OCI-LY7 (cell line): ENCODE measurements at regions of chr4 and their contacts with region 1.

Region 1: DNA sequence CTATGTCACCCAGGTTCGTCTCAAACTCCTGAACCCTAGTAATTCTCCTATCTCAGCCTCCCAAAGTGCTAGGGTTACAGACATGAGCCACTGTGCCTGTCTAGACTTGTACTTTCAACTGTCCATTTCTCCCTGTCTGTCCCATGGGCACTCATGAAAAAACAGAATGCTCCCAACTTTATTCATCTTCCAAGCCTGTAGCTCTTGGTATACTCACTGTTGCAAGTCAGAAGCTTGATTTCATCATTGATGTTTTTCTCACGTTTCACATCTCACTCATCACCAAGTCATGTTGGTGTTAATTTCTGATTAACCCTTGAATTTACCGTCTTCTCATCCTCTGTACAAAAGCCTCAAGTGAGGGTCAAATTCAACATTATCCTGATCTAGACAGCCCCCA is 7.3 kb upstream of the SRP72 start:
- DNase-seq: no peak
- H3K4me3 ChIP-seq: no peak overlapping the region
- H3K27ac ChIP-seq: no peak overlapping the region
- H3K4me1 ChIP-seq: peaks cover 10% of the 10 kb centered on the region
- CTCF ChIP-seq: no peak

Region 2: DNA sequence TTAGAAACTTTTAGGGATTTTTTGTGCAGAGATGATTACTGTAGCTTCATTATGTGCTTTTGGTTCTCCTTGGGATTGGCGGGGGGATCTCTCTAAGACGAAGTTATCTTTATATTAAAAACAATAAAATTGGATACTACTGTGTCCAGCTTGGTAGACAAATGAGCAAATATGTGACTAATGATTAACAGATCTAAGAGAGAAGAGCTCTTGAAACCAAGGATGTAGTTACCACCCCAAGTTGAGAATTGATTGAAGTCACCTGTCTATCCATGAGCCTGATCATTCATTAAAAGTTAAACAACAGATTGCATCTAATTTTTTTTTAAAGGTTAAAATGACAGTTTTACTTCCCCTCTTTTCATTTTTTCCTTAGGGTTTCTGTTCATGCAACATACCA is 15.4 kb before region 1 on chr4:
- CTCF ChIA-PET with region 1: interaction called, 3 read pairs
- POLR2A ChIA-PET with region 1: interaction called, 29 read pairs
- intact Hi-C with region 1: no loop called
- DNase-seq: no peak
- H3K4me3 ChIP-seq: no peak overlapping the region
- H3K27ac ChIP-seq: no peak overlapping the region
- H3K4me1 ChIP-seq: peaks cover 26% of the 10 kb centered on the region
- CTCF ChIP-seq: no peak

Region 3: DNA sequence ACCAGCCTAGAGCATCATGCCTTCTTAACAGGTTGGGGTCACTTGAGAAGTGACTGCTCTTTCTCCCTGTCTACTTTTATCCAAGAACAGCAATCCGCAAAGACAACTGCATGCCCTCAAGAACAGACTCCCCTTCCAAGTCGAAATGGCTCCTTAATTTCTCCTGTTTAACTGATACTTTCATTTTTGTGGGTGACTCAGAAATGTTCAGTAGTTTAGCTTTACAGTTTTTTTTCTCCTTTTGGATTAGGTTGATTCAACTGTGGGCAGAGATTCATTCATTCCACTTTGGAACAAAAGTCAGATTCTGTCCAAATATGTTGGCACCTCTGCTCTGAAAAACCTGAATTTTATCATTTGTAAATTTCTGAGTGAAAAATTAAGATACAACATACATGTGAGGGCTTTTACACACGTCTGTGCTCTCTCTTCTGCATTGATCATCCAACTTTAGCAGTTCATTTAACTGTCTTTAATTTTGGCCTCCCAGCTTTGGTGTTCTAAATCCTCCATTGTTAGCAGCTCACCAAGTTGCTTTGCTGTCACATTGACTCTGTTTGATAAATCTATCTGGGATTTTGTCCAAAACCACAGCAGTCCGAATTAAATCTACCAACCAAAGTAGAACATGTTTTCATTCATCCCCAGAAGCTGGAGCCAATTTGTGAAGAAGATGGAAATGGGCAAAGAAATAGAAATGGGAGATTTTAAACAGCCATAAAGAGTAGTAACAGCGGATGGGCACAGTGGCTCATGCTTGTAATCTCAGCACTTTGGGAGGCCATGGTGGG is 171.0 kb after region 1 on chr4:
- CTCF ChIA-PET with region 1: no interaction called
- POLR2A ChIA-PET with region 1: no interaction called
- intact Hi-C with region 1: no loop called
- DNase-seq: no peak
- H3K4me3 ChIP-seq: no peak overlapping the region
- H3K27ac ChIP-seq: no peak overlapping the region
- H3K4me1 ChIP-seq: no peaks in the 10 kb centered on the region
- CTCF ChIP-seq: no peak

Region 4: DNA sequence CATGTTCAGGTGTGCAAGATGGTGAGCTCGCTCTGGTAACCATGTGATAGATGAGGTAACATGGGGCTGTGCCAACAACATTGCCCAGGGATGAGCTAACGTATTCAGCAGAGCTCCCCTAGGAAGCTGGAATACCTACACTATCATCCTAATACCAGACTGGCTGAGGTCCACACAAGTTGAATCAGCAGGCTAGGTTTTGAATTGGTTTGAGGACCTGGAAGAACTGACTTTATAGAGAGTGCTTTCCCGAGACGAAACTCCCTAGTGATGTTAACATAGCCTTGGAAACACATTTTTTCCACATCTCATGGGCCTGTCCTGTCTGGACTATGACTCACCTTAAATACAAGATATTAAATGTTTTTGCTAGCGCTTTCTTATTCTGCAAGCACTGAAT is 593.4 kb after region 1 on chr4:
- CTCF ChIA-PET with region 1: no interaction called
- POLR2A ChIA-PET with region 1: no interaction called
- intact Hi-C with region 1: no loop called
- DNase-seq: no peak
- H3K4me3 ChIP-seq: no peak overlapping the region
- H3K27ac ChIP-seq: no peak overlapping the region
- H3K4me1 ChIP-seq: no peaks in the 10 kb centered on the region
- CTCF ChIP-seq: no peak